Activated B cell treated with CpG ODN at 0.5 μM for 24 hours (primary cell): ENCODE measurements at regions of chr1 and their contacts with region 1.

Region 1: GRCh38 chr1:110338886-110339406 is at the start of gene RBM15:
- DNase-seq: peak; percentile 82
- ATAC-seq: peak; percentile 72
- H3K4me3 Mint-ChIP-seq: no peak within 1 kb of the TSS
- H3K27ac Mint-ChIP-seq: no peak within 1 kb of the TSS
- H3K4me1 Mint-ChIP-seq: peaks cover 51% of the 10 kb centered on the region
- H3K27me3 Mint-ChIP-seq: no peaks in the 10 kb centered on the region
- CTCF ChIP-seq: no peak
- total RNA-seq, gene RBM15: 52.7 and 61.1 TPM in 2 replicates

Region 2: GRCh38 chr1:108746372-108747205 is 1592.4 kb before region 1 on chr1 and contains the start of gene STXBP3:
- CTCF ChIA-PET with region 1: no interaction called
- POLR2A ChIA-PET with region 1: no interaction called
- intact Hi-C with region 1: loop called (anchors 2 kb)
- DNase-seq: peak; percentile 99
- ATAC-seq: peak; percentile 92
- H3K4me3 Mint-ChIP-seq: peak within 1 kb of the TSS; percentile 99
- H3K27ac Mint-ChIP-seq: peak within 1 kb of the TSS; percentile 99
- H3K4me1 Mint-ChIP-seq: peaks cover 28% of the 10 kb centered on the region
- H3K27me3 Mint-ChIP-seq: no peaks in the 10 kb centered on the region
- CTCF ChIP-seq: peak; percentile 93
- total RNA-seq, gene STXBP3: 46.4 and 50.2 TPM in 2 replicates

Region 3: GRCh38 chr1:110034451-110035235 is 304.3 kb before region 1 on chr1 and contains the start of gene STRIP1:
- CTCF ChIA-PET with region 1: no interaction called
- POLR2A ChIA-PET with region 1: interaction called, 12 read pairs
- intact Hi-C with region 1: loop called (anchors 1 kb)
- DNase-seq: peak; percentile 81
- ATAC-seq: peak; percentile 92
- H3K4me3 Mint-ChIP-seq: peak within 1 kb of the TSS; percentile 93
- H3K27ac Mint-ChIP-seq: peak within 1 kb of the TSS; percentile 90
- H3K4me1 Mint-ChIP-seq: peaks cover 41% of the 10 kb centered on the region
- H3K27me3 Mint-ChIP-seq: no peaks in the 10 kb centered on the region
- CTCF ChIP-seq: no peak
- total RNA-seq, gene STRIP1: 60.4 and 77.3 TPM in 2 replicates

Region 4: GRCh38 chr1:110312188-110313121 is 26.5 kb before region 1 on chr1:
- CTCF ChIA-PET with region 1: interaction called, 16 read pairs
- POLR2A ChIA-PET with region 1: interaction called, 4 read pairs
- intact Hi-C with region 1: loop called (anchors 2 kb)
- DNase-seq: peak; percentile 52
- ATAC-seq: peak; percentile 99
- H3K4me3 Mint-ChIP-seq: no peak overlapping the region
- H3K27ac Mint-ChIP-seq: no peak overlapping the region
- H3K4me1 Mint-ChIP-seq: peaks cover 3% of the 10 kb centered on the region
- H3K27me3 Mint-ChIP-seq: no peaks in the 10 kb centered on the region
- CTCF ChIP-seq: peak; percentile 43

Region 5: DNA sequence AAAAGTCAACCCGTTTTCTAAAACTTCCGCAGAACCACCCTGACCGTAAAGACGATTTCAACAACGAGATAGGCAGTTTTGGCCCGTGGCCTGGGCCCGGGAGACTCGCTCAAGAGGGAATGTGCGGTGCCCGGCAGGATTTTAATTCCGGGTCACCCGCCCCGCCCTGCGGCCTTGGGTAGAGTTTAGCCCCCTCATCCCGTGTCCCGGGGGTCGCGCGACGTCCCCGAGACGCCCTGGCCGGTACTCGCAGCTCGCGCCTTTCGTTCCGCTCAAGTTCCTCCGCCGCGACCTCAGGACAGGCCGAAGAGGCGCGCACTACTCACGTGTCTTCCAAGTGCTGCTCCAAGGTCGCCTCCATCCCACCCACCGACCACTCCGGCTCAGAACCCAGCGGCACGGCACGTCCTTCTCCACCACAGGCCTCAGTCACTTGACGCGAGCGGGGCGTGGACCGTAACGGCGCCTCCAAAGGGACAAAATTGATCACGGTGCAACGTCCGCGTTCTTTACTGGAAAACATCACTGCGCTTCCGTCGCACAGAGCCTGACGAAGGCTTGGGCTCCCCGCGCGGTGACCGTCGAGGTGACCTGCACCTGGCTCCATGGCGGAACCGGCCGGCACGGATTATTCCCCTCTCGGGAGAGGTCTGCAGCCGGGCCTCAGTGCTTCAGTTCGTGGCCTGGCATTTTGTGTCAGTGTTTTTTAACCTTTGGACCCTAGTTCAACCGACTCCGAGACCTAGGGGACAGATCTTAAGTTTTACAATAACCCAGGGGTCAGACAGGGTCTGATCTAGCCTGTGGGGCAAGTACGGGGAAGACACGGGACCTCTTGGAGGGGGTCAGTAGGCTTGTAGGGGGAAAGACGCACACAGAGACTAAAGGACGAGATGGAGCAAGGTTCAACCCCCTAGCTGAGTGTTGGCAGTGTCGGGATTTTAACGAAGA is 68.6 kb after region 1 on chr1 and contains the start of gene LAMTOR5:
- CTCF ChIA-PET with region 1: interaction called, 79 read pairs
- POLR2A ChIA-PET with region 1: interaction called, 149 read pairs
- intact Hi-C with region 1: loop called (anchors 1 kb)
- DNase-seq: peak; percentile 84
- ATAC-seq: peak; percentile 91
- H3K4me3 Mint-ChIP-seq: peak within 1 kb of the TSS; percentile 97
- H3K27ac Mint-ChIP-seq: peak within 1 kb of the TSS; percentile 96
- H3K4me1 Mint-ChIP-seq: peaks cover 26% of the 10 kb centered on the region
- H3K27me3 Mint-ChIP-seq: no peaks in the 10 kb centered on the region
- CTCF ChIP-seq: no peak
- total RNA-seq, gene LAMTOR5: 160 and 172 TPM in 2 replicates

Region 6: DNA sequence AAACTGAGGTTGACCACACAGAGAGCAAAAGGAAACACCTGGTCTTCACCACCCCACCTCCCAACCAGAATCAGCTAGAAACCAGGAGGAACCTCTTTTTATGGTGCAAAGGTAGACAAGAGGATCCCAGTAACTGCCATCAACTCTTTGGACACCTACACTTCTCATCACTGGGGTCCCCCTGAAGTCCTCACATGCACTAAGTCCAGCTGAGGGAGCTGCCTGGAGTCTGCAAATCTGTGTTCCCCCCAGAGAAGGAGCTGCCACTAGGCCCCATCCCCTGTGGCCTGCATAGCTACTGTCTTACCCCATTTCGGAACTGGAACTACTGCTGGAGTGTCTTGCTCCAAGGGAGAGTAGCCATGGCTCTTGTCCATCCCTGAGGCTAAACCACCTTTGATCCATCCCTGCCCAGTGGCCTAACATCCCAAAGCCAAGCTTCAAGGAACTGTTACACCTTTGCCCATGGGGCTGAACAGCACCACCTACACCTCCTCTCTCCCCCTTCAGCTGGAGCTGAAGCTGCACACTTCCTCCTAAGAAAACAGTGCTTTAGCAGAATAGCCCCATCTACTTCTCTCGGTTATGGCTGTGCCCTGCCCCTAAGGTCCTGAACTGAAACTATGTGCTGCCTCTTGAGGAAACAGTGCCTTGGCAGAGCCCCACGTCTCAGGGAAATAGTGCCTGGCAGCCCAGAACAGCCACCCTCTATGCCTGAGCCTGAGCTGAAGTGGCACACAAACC is 448.6 kb after region 1 on chr1:
- CTCF ChIA-PET with region 1: interaction called, 3 read pairs
- POLR2A ChIA-PET with region 1: no interaction called
- intact Hi-C with region 1: loop called (anchors 2 kb)
- DNase-seq: peak; percentile 49
- ATAC-seq: peak; percentile 85
- H3K4me3 Mint-ChIP-seq: peak overlapping the region; percentile 70
- H3K27ac Mint-ChIP-seq: peak overlapping the region; percentile 95
- H3K4me1 Mint-ChIP-seq: peaks cover 70% of the 10 kb centered on the region
- H3K27me3 Mint-ChIP-seq: no peaks in the 10 kb centered on the region
- CTCF ChIP-seq: no peak